ENCODE measurements at regions of chr14 and their contacts with region 1.

Region 1: DNA sequence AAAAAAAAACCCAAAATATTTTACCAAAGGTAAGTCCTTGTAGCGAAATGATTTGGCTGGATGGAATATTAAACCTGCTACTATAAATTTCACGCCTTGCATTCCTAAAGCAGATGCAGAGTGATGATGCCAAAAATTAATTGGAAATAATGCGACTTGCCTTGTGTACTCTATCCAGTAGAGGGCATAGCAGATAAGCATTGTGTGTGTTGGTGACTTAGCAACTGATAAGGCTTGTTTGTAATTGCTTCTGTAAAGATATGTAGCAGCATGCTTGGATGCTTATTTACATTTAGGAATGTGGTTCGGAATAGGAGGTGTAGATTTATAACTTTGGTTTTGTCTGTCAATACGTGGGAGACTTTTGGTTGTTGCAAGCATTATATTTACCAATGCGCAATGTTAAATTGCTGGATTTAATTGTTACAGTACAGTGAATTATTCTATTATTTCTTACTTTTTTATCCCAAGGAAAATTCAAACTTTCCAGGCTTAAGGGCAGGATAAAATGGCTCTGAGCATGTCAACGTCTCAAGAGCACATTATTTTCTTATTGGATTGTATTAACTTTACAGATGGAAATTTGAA is 80.5 kb downstream of the TMEM260 start:
- DNase-seq: peak; percentile 50
- ATAC-seq: peak; percentile 88
- H3K4me3 ChIP-seq: no peak overlapping the region
- H3K27ac ChIP-seq: no peak overlapping the region
- H3K4me1 ChIP-seq: peaks cover 20% of the 10 kb centered on the region
- H3K27me3 ChIP-seq: no peaks in the 10 kb centered on the region; a peak in 1 of 5 replicates
- CTCF ChIP-seq: peak; percentile 76
- EP300 ChIP-seq: no peak
- POLR2A ChIP-seq: no peak
- RAD21 ChIP-seq: peak; percentile 61

Region 2: DNA sequence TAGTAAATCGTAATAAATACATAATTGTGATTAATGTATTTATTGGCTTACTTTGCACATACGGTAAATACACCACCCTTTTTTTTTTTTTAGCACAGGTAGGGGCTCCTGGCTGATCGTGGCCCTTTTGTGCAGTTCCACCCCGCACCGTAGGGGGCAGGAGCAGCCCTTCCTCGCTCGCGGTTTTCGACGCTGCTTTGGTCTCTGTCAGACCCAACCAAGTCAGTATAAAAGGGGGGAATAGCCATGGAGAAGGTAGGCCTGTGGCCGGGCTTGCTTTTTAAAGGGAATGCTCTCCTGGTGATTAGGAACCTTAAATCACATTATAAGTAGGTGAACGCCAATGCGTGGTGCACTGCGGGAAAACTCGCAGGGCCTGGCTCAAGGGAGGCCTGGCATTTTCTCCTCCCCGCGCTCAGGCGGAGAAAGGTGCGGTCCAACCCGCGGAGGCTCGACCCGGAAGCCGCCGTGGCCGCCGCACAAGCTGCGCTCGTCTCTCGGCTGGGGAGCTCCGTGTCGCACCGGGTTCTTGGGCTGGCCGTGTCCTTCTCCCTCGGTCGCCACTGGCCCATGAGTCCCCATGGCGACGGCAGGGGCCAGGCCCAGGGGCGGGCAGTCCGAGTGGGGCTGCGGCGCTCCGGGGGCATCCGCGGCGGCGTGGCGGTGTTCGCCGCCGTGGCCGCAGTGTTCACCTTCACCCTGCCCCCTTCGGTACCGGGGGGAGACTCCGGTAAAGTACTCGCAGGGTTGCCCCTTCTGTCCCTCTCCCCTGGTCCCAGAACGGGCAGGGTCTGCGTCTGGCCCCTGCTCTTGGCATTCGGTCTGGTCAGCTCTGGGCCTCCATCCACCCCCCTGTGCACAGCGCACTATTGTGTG is 80.5 kb before region 1 on chr14 and contains the start of gene TMEM260:
- CTCF ChIA-PET with region 1: no interaction called
- POLR2A ChIA-PET with region 1: no interaction called
- in situ Hi-C with region 1: no loop called
- intact Hi-C with region 1: loop called (anchors 5 kb)
- DNase-seq: peak; percentile 81
- ATAC-seq: peak; percentile 91
- H3K4me3 ChIP-seq: peak within 1 kb of the TSS; percentile 82 to 98 (median 95)
- H3K27ac ChIP-seq: peak within 1 kb of the TSS; percentile 92
- H3K4me1 ChIP-seq: peaks cover 38% of the 10 kb centered on the region
- H3K27me3 ChIP-seq: no peaks in the 10 kb centered on the region; a peak in 1 of 5 replicates
- CTCF ChIP-seq: peak; percentile 81
- EP300 ChIP-seq: 0 out of 4 replicates have a peak, but pooled peaks of 1 of the 2 experiments have one; percentile 3
- POLR2A ChIP-seq: peak; percentile 90 to 96
- RAD21 ChIP-seq: peak; percentile 48; the same call in 1 of the 2 replicates
- total RNA-seq, gene TMEM260: 4.8 and 9.3 TPM in 2 replicates

Region 3: GRCh38 chr14:56855891-56856461 is 195.9 kb after region 1 on chr14:
- CTCF ChIA-PET with region 1: no interaction called
- POLR2A ChIA-PET with region 1: no interaction called
- in situ Hi-C with region 1: no loop called
- intact Hi-C with region 1: no loop called
- DNase-seq: peak; percentile 8
- ATAC-seq: peak; percentile 56
- H3K4me3 ChIP-seq: no peak overlapping the region
- H3K27ac ChIP-seq: no peak overlapping the region
- H3K4me1 ChIP-seq: no peaks in the 10 kb centered on the region; the same call in 1 of the 2 replicates
- H3K27me3 ChIP-seq: peaks cover 0 to 5% of the 10 kb centered on the region in 2 experiments; a peak in 2 of 5 replicates
- CTCF ChIP-seq: no peak
- EP300 ChIP-seq: no peak
- POLR2A ChIP-seq: no peak
- RAD21 ChIP-seq: no peak

Region 4: DNA sequence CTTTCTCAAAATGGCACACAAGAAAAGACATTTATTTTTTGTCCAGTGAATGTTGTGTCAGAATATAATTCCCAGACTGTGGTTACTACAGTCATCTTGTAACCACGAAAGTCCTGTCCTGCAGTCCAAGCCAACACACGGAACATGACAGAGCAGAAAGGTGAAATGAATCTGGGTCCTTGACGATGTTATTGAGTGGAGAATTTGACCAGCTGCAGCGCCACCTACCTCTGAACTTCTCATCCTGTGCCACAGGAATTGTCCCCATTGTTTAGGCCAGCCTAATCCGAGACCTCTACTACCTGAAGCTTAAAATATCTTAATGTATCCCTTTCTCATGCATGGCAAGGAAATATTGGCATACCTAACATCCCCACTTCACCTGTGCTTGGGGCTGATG is 214.3 kb after region 1 on chr14:
- CTCF ChIA-PET with region 1: no interaction called
- POLR2A ChIA-PET with region 1: no interaction called
- in situ Hi-C with region 1: no loop called
- intact Hi-C with region 1: loop called (anchors 5 kb)
- DNase-seq: peak; percentile 18
- ATAC-seq: peak; percentile 81
- H3K4me3 ChIP-seq: no peak overlapping the region
- H3K27ac ChIP-seq: no peak overlapping the region
- H3K4me1 ChIP-seq: no peaks in the 10 kb centered on the region
- H3K27me3 ChIP-seq: peaks cover 0 to 7% of the 10 kb centered on the region in 2 experiments; a peak in 2 of 5 replicates
- CTCF ChIP-seq: peak; percentile 61
- EP300 ChIP-seq: no peak
- POLR2A ChIP-seq: no peak
- RAD21 ChIP-seq: no peak

Region 5: GRCh38 chr14:56963381-56963780 is 303.3 kb after region 1 on chr14:
- CTCF ChIA-PET with region 1: no interaction called
- POLR2A ChIA-PET with region 1: no interaction called
- in situ Hi-C with region 1: no loop called
- intact Hi-C with region 1: no loop called
- DNase-seq: no peak
- ATAC-seq: no peak
- H3K4me3 ChIP-seq: no peak overlapping the region
- H3K27ac ChIP-seq: no peak overlapping the region
- H3K4me1 ChIP-seq: no peaks in the 10 kb centered on the region
- H3K27me3 ChIP-seq: no peaks in the 10 kb centered on the region; a peak in 1 of 5 replicates
- CTCF ChIP-seq: no peak
- EP300 ChIP-seq: no peak
- POLR2A ChIP-seq: no peak
- RAD21 ChIP-seq: no peak

Region 6: GRCh38 chr14:57182760-57183503 is 522.9 kb after region 1 on chr14:
- CTCF ChIA-PET with region 1: no interaction called
- POLR2A ChIA-PET with region 1: no interaction called
- in situ Hi-C with region 1: loop called (anchors 25 kb)
- intact Hi-C with region 1: loop called (anchors 10 kb)
- DNase-seq: peak; percentile 15
- ATAC-seq: peak; percentile 68
- H3K4me3 ChIP-seq: no peak overlapping the region
- H3K27ac ChIP-seq: no peak overlapping the region
- H3K4me1 ChIP-seq: no peaks in the 10 kb centered on the region
- H3K27me3 ChIP-seq: peaks cover 0 to 5% of the 10 kb centered on the region in 2 experiments; a peak in 2 of 5 replicates
- CTCF ChIP-seq: peak; percentile 66
- EP300 ChIP-seq: no peak
- POLR2A ChIP-seq: no peak
- RAD21 ChIP-seq: 0 out of 2 replicates have a peak, but pooled peaks have one; percentile 38

Region 7: DNA sequence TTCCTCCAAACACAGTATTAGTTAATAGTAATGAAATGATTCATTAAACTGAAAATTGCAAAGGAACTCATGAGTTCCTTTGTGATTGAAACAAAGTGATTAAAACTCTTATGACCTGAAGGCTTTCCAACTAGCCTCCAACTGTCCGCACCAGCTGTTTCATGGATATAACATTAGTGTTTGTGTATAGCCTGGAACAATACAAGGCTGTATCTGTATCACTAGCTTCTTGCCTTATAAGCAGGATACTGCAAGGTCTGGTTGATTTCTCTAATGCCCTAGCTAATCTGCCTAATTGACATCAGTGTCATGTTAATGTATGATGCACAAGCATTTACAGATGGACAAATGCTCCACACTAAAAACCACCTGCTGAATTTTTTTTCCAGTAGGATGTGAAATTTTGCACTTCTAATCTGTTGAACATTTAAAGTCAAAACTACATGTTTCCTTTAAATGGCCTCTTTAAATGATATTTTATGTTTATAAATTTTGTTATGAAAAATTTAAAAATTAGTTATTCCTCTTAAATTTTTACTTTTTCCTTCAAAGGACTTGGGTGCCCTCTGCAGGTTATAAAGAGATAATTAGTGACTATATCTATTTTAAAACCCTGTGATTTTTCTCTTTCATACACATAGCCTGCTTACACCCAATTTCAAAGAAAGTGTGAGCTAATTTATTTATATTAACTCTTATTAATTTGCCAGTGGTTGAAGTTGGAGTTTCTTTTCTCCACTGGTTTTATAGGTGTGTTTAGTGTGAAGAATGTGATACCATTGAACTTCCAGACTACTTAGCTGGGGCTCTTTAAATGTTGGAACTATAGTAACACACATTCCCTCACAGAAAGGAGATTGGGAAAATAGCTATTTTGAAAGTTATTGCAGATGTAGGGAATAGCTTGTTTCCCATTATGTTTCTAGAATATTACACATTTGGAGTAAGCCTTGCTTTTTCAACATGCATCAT is 634.1 kb after region 1 on chr14:
- CTCF ChIA-PET with region 1: no interaction called
- POLR2A ChIA-PET with region 1: no interaction called
- in situ Hi-C with region 1: no loop called
- intact Hi-C with region 1: loop called (anchors 10 kb)
- DNase-seq: no peak
- ATAC-seq: no peak
- H3K4me3 ChIP-seq: no peak overlapping the region
- H3K27ac ChIP-seq: no peak overlapping the region
- H3K4me1 ChIP-seq: peaks cover 27% of the 10 kb centered on the region
- H3K27me3 ChIP-seq: no peaks in the 10 kb centered on the region
- CTCF ChIP-seq: no peak
- EP300 ChIP-seq: no peak
- POLR2A ChIP-seq: no peak
- RAD21 ChIP-seq: no peak

Measured in HepG2 (cell line).